ENCODE measurements at regions of chr6 and their contacts with region 1.

Region 1: DNA sequence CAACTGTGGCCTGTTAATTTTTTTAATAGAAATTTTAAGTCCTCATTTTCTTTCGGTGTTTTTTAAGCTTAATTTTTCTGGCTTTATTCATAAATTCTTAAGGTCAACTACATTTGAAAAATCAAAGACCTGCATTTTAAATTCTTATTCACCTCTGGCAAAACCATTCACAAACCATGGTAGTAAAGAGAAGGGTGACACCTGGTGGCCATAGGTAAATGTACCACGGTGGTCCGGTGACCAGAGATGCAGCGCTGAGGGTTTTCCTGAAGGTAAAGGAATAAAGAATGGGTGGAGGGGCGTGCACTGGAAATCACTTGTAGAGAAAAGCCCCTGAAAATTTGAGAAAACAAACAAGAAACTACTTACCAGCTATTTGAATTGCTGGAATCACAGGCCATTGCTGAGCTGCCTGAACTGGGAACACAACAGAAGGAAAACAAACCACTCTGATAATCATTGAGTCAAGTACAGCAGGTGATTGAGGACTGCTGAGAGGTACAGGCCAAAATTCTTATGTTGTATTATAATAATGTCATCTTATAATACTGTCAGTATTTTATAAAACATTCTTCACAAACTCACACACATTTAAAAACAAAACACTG is 10.1 kb downstream of the HFE start:
- DNase-seq: peak; percentile 78
- ATAC-seq: peak; percentile 87
- H3K4me3 ChIP-seq: no peak overlapping the region
- H3K27ac ChIP-seq: no peak overlapping the region
- H3K4me1 ChIP-seq: peaks cover 2% of the 10 kb centered on the region
- H3K27me3 ChIP-seq: no peaks in the 10 kb centered on the region
- CTCF ChIP-seq: peak; percentile 92

Region 2: DNA sequence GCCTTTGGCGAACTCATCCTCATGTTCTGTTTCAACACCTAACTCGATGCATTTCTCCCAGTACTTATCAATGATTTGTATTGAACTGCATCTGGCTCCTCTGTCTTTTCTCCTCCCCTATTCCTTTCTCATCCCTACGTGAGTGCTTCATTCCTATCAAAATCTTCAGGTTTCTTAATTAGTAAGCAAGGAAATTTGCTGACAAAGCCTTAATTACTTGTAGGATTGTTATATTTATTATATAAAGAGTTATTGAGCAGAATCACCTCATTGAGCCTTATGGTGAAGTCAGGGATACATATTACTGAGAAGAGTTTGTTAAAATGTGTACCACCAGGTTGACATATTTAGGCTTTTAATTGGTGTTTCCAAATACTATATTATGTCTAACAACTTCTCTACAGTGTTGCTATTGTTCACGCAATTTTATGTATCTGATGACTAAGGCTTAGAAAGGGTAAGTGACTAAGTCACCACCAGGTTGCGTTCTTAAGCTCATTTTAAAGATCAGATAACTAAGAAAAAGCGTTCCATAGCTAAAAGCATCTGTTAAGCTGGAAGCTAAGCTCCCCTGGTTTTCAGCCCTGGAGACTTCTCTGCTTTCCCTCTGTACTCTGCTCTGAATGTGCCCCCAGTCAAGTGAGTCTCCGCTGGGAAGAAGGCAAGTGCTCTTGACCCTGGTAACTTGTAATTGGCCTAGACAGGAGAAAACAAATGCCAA is 426.4 kb before region 1 on chr6:
- CTCF ChIA-PET with region 1: no interaction called
- POLR2A ChIA-PET with region 1: no interaction called
- intact Hi-C with region 1: no loop called
- DNase-seq: peak; percentile 72
- ATAC-seq: peak; percentile 86
- H3K4me3 ChIP-seq: no peak overlapping the region
- H3K27ac ChIP-seq: no peak overlapping the region
- H3K4me1 ChIP-seq: peaks cover 10% of the 10 kb centered on the region
- H3K27me3 ChIP-seq: peaks cover 42% of the 10 kb centered on the region
- CTCF ChIP-seq: peak; percentile 41; the same call in 1 of the 2 replicates

Region 3: DNA sequence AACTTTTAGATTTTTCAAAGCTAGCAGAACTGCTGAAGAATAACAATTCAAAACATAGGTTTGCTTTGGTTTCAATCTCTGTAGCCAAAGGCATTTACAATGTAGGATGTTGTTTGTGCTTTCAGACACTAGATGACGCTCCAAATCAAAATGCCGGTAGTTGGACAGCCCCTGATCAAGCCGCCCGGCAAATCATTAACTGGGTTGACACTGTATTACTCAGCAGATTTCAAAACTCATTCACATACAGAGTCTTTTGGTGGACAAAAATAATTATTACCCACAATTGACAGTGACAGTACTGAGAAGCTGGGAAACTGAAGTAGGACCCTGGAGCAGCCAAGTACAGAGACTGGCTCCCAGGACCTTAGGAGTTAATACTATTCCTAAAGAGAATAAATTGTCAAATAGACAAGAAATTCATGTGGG is 31.4 kb before region 1 on chr6:
- CTCF ChIA-PET with region 1: interaction called, 9 read pairs
- POLR2A ChIA-PET with region 1: no interaction called
- intact Hi-C with region 1: loop called (anchors 1 kb)
- DNase-seq: peak; percentile 91
- ATAC-seq: peak; percentile 86
- H3K4me3 ChIP-seq: no peak overlapping the region; the same call in 1 of the 2 replicates
- H3K27ac ChIP-seq: peak overlapping the region; percentile 32
- H3K4me1 ChIP-seq: peaks cover 9% of the 10 kb centered on the region
- H3K27me3 ChIP-seq: no peaks in the 10 kb centered on the region
- CTCF ChIP-seq: peak; percentile 93